ENCODE measurements at regions of chr19 and their contacts with region 1.

Region 1: GRCh38 chr19:51777570-51778462 is 16.8 kb downstream of the FPR2 start:
- DNase-seq: no peak
- H3K4me3 ChIP-seq: no peak overlapping the region
- H3K27ac ChIP-seq: no peak overlapping the region
- H3K4me1 ChIP-seq: peaks cover 0 to 6% (median 0%) of the 10 kb centered on the region in 3 donors
- H3K27me3 ChIP-seq: peaks cover 0 to 73% (median 0%) of the 10 kb centered on the region in 4 donors
- CTCF ChIP-seq: peak; percentile 50 to 76 (median 68)
- POLR2A ChIP-seq: no peak

Region 2: DNA sequence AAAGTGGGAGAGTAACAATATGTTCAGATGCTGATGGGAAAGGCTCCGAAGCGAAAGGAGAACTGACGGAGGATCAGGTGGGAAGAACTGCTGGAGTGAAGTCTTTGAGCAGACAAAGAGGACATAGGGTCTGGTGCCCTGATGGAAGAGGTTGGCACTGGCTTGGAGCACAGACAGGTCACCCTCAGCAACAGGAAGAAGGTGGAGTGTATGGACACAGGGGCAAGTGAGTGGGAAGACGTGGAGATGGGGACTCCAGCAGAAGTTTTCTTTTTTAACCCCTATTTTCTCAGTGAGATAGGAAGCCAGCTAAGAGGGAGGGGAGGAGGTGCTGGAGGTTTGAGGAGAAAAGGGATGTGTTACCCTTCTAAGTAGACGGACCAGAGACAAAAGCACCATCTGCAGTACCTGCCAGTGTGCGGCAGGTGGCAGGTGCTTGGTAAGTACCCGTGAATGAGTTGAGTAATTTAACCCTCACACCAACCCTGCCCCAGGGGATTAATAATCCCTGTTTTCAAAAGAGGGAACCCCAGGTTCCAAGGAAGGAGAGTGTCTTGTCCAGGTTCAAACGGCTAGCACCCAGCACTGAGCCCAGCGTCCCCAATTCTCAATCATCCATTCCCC is 65.2 kb before region 1 on chr19:
- intact Hi-C with region 1: loop called (anchors 10 kb)
- DNase-seq: no peak
- H3K4me3 ChIP-seq: no peak overlapping the region
- H3K27ac ChIP-seq: no peak overlapping the region
- H3K4me1 ChIP-seq: no peaks in the 10 kb centered on the region
- H3K27me3 ChIP-seq: peaks cover 0 to 30% (median 0%) of the 10 kb centered on the region in 4 donors
- CTCF ChIP-seq: peak in 5 of 6 experiments; percentile 45 to 69 (median 57)
- POLR2A ChIP-seq: no peak

Region 3: DNA sequence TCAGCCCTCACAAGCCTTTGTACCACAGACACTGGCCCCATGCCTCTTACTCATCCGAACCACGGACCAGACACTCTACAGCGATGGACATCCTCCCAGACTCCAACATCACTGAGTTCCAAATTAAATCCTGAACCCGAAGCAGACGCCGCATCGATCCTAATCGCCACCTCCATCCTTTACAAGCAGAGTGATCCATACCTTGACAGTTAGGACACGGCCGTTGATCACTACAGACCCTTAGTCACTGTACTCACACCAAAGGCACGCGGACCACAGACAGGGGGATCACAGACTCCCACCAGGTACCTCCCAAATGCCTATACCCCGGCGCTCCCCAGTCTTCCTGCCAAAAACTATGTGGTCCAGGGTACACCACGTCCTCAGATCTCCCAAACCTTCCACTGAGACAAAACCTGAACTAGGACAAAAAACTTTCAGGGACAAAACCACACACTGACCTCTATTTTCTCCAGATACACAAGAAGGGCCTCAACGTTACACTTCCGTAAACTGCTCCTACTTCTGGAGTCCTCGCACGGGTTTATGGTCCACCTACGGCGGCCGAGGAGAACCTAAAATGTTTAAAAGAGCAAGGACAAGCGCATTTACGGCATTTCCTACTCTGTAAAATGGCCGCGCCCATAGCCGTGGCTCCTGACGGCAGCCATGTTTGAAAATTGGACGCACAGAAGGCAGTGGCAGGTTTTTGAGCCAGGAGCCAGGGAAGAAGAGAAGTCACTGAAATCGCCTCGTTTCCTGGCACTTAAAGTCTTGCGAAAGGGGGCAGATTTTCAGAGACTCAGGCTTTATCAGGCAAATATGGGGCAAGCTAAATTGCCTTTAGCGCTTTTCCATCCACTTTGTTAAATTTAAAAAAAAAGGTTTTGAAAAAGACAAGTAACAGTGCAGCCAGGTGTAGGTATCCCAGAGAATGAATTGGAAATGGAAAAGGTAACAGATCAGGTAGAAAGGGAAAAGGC is 208.8 kb after region 1 on chr19 and contains the start of gene ZNF350:
- intact Hi-C with region 1: no loop called
- DNase-seq: peak; percentile 72
- H3K4me3 ChIP-seq: peak within 1 kb of the TSS; percentile 71 to 94 (median 80)
- H3K27ac ChIP-seq: peak within 1 kb of the TSS; percentile 81 to 88 (median 84)
- H3K4me1 ChIP-seq: peaks cover 6 to 21% (median 11%) of the 10 kb centered on the region in 3 donors
- H3K27me3 ChIP-seq: no peaks in the 10 kb centered on the region
- CTCF ChIP-seq: peak in 1 of 6 experiments; percentile 18
- POLR2A ChIP-seq: peak in 1 of 4 donors; percentile 26
- total RNA-seq, gene ZNF350: 2.9 to 12.6 (median 6.6) TPM